Head of caudate nucleus (tissue), 42 donors: ENCODE measurements at regions of chr1 and their contacts with region 1.

Region 1: GRCh38 chr1:109643385-109644230 is 12.3 kb upstream of the GSTM4 start:
- DNase-seq: peak in 39 of 42 donors; percentile 33 to 87 (median 76)

Region 2: DNA sequence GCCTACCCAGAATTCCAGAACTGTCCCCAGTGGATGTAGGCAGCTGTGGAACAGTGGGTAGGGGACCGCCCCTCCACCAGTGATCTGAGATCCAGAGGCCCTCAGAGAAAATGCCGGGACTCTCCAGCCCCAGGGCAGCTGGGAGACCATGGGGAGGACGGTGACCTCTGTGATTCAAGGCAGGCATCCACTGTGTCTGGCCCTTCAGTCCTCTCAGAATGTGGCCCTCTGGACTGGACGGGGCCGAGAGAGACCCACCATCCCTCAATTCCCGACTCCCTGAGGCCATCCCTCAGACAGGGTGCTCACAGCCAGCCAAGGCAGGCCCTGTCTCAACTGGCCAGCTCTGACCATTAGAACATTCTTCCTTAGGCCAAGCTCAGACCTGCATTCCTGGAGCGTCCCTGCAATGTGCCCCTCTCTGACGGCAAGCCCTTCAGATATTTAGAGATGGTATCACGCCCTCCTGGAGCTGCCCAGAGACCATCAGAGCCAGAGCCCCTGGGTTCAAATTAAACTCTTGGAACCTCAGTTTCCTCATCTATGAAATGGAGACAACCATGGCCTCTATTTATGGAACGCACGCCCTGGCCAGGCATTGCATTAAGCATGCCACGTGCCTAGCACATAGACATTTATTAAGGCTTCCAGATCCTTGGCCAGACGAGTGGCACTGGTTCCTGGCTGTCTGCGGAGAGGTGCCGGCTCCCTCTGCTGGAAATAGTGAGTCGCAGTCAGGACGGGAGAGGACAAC is 129.7 kb after region 1 on chr1:
- intact Hi-C with region 1: loop called (anchors 5 kb)
- DNase-seq: peak; percentile 65 to 94 (median 86)